ENCODE measurements at regions of chr1 and their contacts with region 1.

Region 1: DNA sequence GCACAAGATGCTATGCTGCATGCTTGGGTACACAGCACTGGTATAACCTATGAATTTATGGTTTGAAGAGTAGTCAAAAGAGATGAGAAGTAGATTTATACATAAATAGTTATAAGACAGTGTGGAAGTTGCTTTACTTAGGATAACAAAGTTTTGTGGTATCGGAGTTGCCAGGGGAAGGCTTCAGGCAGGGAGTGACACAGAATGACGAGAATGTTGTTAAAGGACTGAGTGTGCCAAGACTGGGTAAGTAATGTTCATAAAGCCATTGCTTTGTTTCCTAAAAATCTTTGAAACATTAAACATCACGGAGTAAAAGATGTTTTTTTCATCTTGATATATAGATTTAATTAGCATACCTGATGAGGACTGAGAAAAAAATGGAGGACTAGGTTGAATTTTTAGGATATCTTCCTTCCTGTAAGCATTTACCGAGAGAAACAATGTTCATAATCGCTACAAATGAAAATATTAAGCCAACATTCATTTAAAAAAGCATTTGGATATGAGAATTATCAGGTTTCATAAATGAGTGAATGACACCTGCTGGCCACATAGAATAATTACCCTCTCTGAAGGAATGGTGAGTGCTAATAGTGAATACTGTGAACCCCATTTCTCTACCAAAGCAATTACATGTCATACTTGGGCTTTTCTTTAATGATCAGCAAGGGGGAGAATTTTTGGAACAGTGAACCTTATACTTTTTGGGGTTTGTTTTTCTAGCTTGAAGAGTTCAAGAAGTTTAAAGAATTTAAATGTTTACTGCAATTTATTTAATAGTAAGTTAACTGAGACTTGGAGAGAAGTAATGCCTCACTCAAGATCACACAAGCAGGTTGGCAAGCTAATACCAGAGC is 28.4 kb downstream of the EXTL2 start:
- DNase-seq: no peak
- H3K4me3 ChIP-seq: no peak overlapping the region
- H3K27ac ChIP-seq: no peak overlapping the region
- H3K4me1 ChIP-seq: peaks cover 0 to 5% (median 0%) of the 10 kb centered on the region in 3 donors
- H3K27me3 ChIP-seq: no peaks in the 10 kb centered on the region
- CTCF ChIP-seq: peak in 5 of 6 experiments; percentile 45 to 72 (median 57)
- POLR2A ChIP-seq: no peak

Region 2: GRCh38 chr1:100469578-100469977 is 396.7 kb before region 1 on chr1:
- intact Hi-C with region 1: loop called (anchors 5 kb)
- DNase-seq: no peak
- H3K4me3 ChIP-seq: no peak overlapping the region
- H3K27ac ChIP-seq: no peak overlapping the region
- H3K4me1 ChIP-seq: no peaks in the 10 kb centered on the region
- H3K27me3 ChIP-seq: no peaks in the 10 kb centered on the region
- CTCF ChIP-seq: no peak
- POLR2A ChIP-seq: no peak

Region 3: GRCh38 chr1:101122452-101123166 is 256.3 kb after region 1 on chr1:
- intact Hi-C with region 1: no loop called
- DNase-seq: no peak
- H3K4me3 ChIP-seq: no peak overlapping the region
- H3K27ac ChIP-seq: no peak overlapping the region
- H3K4me1 ChIP-seq: peaks cover 0 to 6% (median 0%) of the 10 kb centered on the region in 3 donors
- H3K27me3 ChIP-seq: no peaks in the 10 kb centered on the region
- CTCF ChIP-seq: no peak
- POLR2A ChIP-seq: no peak

Measured in esophagus squamous epithelium (tissue), 5 donors.